ENCODE measurements at regions of chr7 and their contacts with region 1.

Region 1: GRCh38 chr7:13312327-13312726 is 624.9 kb downstream of the ARL4A start:
- DNase-seq: no peak
- ATAC-seq: no peak
- H3K4me3 ChIP-seq: no peak overlapping the region
- H3K27ac ChIP-seq: no peak overlapping the region
- H3K4me1 ChIP-seq: no peaks in the 10 kb centered on the region
- H3K27me3 ChIP-seq: no peaks in the 10 kb centered on the region
- CTCF ChIP-seq: no peak

Region 2: DNA sequence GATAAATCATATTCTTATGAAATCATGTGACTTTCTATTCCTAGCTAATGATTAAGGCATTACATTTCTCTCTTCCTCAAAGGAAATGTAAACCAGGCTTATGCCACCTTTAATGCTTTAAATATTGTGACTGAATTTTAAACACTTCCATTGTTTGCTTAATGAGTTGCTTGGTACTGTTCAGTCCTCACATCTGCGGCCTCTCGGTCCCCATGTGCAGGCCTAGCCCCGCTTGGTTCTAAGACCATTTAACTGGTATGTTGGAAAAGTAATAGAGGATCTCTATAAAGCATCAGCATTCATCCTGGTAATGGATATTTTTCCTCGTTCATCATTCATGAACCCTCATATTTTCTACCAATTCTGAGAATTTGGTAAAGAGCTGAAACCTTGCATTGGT is 1507.7 kb before region 1 on chr7:
- intact Hi-C with region 1: loop called in 1 of 2 experiments (anchors 5 kb)
- DNase-seq: no peak
- ATAC-seq: no peak
- H3K4me3 ChIP-seq: no peak overlapping the region
- H3K27ac ChIP-seq: no peak overlapping the region
- H3K4me1 ChIP-seq: no peaks in the 10 kb centered on the region
- H3K27me3 ChIP-seq: no peaks in the 10 kb centered on the region
- CTCF ChIP-seq: no peak

Region 3: GRCh38 chr7:13414661-13415105 is 102.4 kb after region 1 on chr7:
- intact Hi-C with region 1: no loop called
- DNase-seq: no peak
- ATAC-seq: peak; percentile 71 to 95 (median 82)
- H3K4me3 ChIP-seq: peak overlapping the region; percentile 52
- H3K27ac ChIP-seq: no peak overlapping the region
- H3K4me1 ChIP-seq: peaks cover 4% of the 10 kb centered on the region
- H3K27me3 ChIP-seq: no peaks in the 10 kb centered on the region
- CTCF ChIP-seq: no peak

Region 4: DNA sequence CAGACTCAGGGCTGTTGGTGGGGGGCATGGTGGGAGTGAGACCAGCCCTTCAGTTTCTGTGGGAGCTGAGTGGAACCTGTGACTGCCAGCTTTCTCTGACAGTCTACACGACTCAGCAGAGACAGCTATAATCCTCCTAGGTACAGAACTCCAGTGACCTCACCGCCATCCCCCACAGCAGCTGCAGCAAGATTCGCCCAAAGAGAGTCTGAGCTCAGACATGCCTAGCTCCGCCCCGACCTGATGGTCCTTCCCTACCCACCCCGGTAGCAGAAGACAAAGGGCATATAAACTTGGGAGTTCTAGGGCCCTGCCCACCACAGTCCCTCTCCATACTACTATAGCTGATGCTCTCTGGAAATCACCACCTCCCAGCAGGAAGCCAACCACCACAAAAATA is 177.1 kb after region 1 on chr7:
- intact Hi-C with region 1: no loop called
- DNase-seq: no peak
- ATAC-seq: no peak
- H3K4me3 ChIP-seq: no peak overlapping the region
- H3K27ac ChIP-seq: no peak overlapping the region
- H3K4me1 ChIP-seq: no peaks in the 10 kb centered on the region
- H3K27me3 ChIP-seq: no peaks in the 10 kb centered on the region
- CTCF ChIP-seq: no peak

Measured in psoas muscle (tissue), 8 donors.